ENCODE measurements at regions of chr15 and their contacts with region 1.

Region 1: GRCh38 chr15:81000624-81001151 is at the start of gene TLNRD1:
- DNase-seq: peak; percentile 91
- H3K4me3 Mint-ChIP-seq: peak within 1 kb of the TSS; percentile 98
- H3K27ac Mint-ChIP-seq: peak within 1 kb of the TSS; percentile 99
- H3K4me1 Mint-ChIP-seq: peaks cover 60% of the 10 kb centered on the region
- H3K27me3 Mint-ChIP-seq: no peaks in the 10 kb centered on the region
- total RNA-seq, gene TLNRD1: 47.1 to 48.8 TPM

Region 2: DNA sequence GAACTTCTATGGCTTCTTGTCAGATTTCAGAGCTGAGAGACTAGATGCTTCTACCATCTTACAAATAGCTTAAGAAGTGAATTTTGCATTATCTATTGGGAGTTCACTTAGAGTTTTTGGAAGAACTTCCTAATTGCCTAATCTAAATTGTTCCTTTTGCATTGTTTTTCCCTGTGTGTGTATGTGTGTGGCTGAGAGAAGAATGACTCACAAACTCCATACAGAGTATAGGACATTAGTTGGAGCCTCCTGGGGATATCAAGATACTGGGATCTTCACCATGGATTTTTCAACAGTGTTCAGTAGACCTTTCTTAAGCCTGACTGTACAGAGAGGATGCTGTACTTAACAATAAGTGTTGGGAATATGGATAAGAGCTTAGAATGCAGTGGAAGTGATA is 10.9 kb after region 1 on chr15:
- CTCF ChIA-PET with region 1: interaction called, 4 read pairs
- POLR2A ChIA-PET with region 1: interaction called, 25 read pairs
- DNase-seq: no peak
- H3K4me3 Mint-ChIP-seq: no peak overlapping the region
- H3K27ac Mint-ChIP-seq: no peak overlapping the region
- H3K4me1 Mint-ChIP-seq: peaks cover 34% of the 10 kb centered on the region
- H3K27me3 Mint-ChIP-seq: no peaks in the 10 kb centered on the region

Region 3: GRCh38 chr15:81038975-81039607 is 38.4 kb after region 1 on chr15:
- CTCF ChIA-PET with region 1: no interaction called
- POLR2A ChIA-PET with region 1: interaction called, 21 read pairs
- DNase-seq: peak; percentile 17
- H3K4me3 Mint-ChIP-seq: no peak overlapping the region
- H3K27ac Mint-ChIP-seq: peak overlapping the region; percentile 85
- H3K4me1 Mint-ChIP-seq: peaks cover 30% of the 10 kb centered on the region
- H3K27me3 Mint-ChIP-seq: no peaks in the 10 kb centered on the region

Region 4: DNA sequence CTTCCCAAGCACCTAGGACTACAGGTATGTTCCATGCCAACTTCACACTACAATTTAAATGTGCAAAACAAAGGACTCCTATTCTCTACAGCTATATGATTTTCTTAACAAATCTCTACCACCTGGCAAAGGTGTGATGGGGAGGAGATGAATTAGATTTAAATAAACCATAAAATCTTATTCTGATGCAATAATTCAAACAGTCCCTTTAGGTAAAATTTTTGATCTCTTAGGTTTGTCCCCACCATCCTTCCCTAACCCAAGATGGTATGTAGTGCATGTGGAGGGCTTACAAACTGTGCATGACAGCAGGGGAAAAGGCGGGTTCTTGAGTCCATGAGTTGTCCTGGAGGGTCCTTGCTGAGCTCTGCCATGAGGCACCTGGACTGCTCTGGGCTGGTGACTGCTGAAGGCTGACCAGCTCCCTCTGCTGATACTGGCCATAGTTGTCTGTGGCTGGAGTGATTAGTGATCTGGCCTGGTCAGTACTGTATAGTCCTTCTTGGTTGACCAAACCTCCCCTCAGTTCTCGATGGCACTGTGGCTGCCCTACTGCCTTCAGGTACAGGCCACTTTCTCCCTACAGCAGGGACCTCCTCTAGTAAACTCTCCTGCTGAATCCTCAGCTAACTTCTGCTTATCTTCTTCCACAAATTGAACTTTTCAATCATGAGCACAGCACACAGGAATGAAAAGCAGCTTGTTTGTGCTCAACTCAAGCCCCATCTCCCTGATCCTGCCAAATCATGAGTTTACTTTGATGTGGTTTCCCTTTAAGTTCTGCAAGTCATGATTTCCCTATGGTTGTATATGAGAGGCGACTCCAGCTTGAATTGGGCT is 163.5 kb after region 1 on chr15:
- CTCF ChIA-PET with region 1: no interaction called
- POLR2A ChIA-PET with region 1: interaction called, 17 read pairs
- DNase-seq: no peak
- H3K4me3 Mint-ChIP-seq: no peak overlapping the region
- H3K27ac Mint-ChIP-seq: peak overlapping the region; percentile 44
- H3K4me1 Mint-ChIP-seq: peaks cover 63% of the 10 kb centered on the region
- H3K27me3 Mint-ChIP-seq: peaks cover 10% of the 10 kb centered on the region